Naive thymus-derived CD4-positive, alpha-beta T cell (primary cell): ENCODE measurements at regions of chr2 and their contacts with region 1.

Region 1: GRCh38 chr2:200963124-200963917 is at the start of gene ORC2:
- DNase-seq: peak; percentile 92 to 97 (median 95)
- ATAC-seq: peak; percentile 98
- H3K4me3 ChIP-seq: peak within 1 kb of the TSS; percentile 89
- H3K4me3 Mint-ChIP-seq: peak within 1 kb of the TSS; percentile 89 to 100 (median 98)
- H3K27ac ChIP-seq: peak within 1 kb of the TSS; percentile 90
- H3K27ac Mint-ChIP-seq: peak within 1 kb of the TSS; percentile 96 to 100 (median 99)
- H3K4me1 ChIP-seq: peaks cover 21 to 32% of the 10 kb centered on the region in 2 donors
- H3K4me1 Mint-ChIP-seq: peaks cover 40 to 83% (median 70%) of the 10 kb centered on the region in 7 donors
- H3K27me3 ChIP-seq: no peaks in the 10 kb centered on the region
- H3K27me3 Mint-ChIP-seq: no peaks in the 10 kb centered on the region
- total RNA-seq, gene ORC2: 29.8 to 78.0 (median 56.2) TPM

Region 2: DNA sequence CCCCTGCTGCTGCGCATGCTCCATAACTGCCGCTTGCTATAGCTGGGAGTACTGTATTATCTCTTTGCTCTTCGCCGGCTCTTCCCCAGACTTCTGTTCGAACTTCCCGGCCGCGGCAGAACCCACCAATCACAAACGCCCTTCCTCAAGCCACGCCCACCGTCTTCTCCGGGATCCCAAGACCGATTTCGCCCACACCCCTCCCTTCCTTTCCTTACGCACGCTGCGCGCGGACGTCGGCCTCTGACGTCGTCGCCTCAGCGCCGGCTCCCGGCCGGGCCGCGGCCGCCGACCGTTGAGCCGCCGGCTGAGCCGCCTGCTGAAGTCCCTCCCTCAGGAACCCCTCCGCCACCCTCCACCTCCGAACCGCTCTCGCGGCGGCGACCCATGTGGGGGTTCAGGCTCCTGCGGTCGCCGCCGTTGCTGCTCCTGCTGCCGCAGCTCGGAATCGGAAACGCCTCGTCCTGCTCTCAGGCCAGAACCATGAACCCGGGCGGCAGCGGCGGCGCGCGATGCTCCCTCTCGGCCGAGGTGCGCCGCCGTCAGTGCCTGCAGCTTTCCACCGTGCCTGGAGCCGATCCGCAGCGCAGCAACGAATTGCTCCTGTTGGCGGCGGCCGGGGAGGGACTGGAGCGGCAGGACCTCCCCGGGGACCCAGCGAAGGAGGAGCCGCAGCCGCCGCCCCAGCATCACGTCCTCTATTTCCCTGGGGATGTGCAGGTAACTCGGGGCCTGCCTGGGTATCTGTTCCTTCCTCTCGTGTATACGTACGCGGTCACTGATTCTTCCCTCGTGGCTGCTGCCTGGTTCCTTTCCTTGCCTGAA is 1052.1 kb before region 1 on chr2 and contains the start of gene C2orf69:
- CTCF ChIA-PET with region 1: no interaction called
- POLR2A ChIA-PET with region 1: no interaction called
- intact Hi-C with region 1: loop called in 1 of 2 experiments (anchors 1 kb)
- DNase-seq: peak; percentile 80 to 92 (median 83)
- ATAC-seq: peak; percentile 93
- H3K4me3 ChIP-seq: peak within 1 kb of the TSS; percentile 75
- H3K4me3 Mint-ChIP-seq: peak within 1 kb of the TSS; percentile 89 to 100 (median 98)
- H3K27ac ChIP-seq: peak within 1 kb of the TSS; percentile 89
- H3K27ac Mint-ChIP-seq: peak within 1 kb of the TSS; percentile 72 to 95 (median 94)
- H3K4me1 ChIP-seq: peaks cover 11 to 19% of the 10 kb centered on the region in 2 donors
- H3K4me1 Mint-ChIP-seq: peaks cover 26 to 47% (median 37%) of the 10 kb centered on the region in 7 donors
- H3K27me3 ChIP-seq: no peaks in the 10 kb centered on the region
- H3K27me3 Mint-ChIP-seq: peaks cover 0 to 14% (median 8%) of the 10 kb centered on the region in 5 donors
- total RNA-seq, gene C2orf69: 10.1 to 15.4 (median 12.7) TPM

Region 3: GRCh38 chr2:200713003-200713703 is 250.2 kb before region 1 on chr2:
- CTCF ChIA-PET with region 1: interaction called, 4 read pairs
- POLR2A ChIA-PET with region 1: interaction called, 4 read pairs
- intact Hi-C with region 1: loop called (anchors 1 kb)
- DNase-seq: peak; percentile 72 to 96 (median 94)
- ATAC-seq: peak; percentile 98
- H3K4me3 ChIP-seq: peak overlapping the region; percentile 24
- H3K4me3 Mint-ChIP-seq: peak overlapping the region; percentile 75 to 88 (median 81)
- H3K27ac ChIP-seq: peak overlapping the region; percentile 82
- H3K27ac Mint-ChIP-seq: peak overlapping the region; percentile 97 to 100 (median 99)
- H3K4me1 ChIP-seq: peaks cover 5 to 8% of the 10 kb centered on the region in 2 donors
- H3K4me1 Mint-ChIP-seq: peaks cover 0 to 25% (median 12%) of the 10 kb centered on the region in 7 donors
- H3K27me3 ChIP-seq: no peaks in the 10 kb centered on the region
- H3K27me3 Mint-ChIP-seq: peaks cover 0 to 4% (median 0%) of the 10 kb centered on the region in 5 donors

Region 4: GRCh38 chr2:200747668-200748618 is 215.4 kb before region 1 on chr2:
- CTCF ChIA-PET with region 1: no interaction called
- POLR2A ChIA-PET with region 1: no interaction called
- intact Hi-C with region 1: no loop called
- DNase-seq: no peak
- ATAC-seq: no peak
- H3K4me3 ChIP-seq: no peak overlapping the region
- H3K4me3 Mint-ChIP-seq: no peak overlapping the region
- H3K27ac ChIP-seq: no peak overlapping the region
- H3K27ac Mint-ChIP-seq: peak overlapping the region in 1 of 9 donors; percentile 72
- H3K4me1 ChIP-seq: no peaks in the 10 kb centered on the region
- H3K4me1 Mint-ChIP-seq: no peaks in the 10 kb centered on the region
- H3K27me3 ChIP-seq: no peaks in the 10 kb centered on the region
- H3K27me3 Mint-ChIP-seq: peaks cover 4 to 14% (median 6%) of the 10 kb centered on the region in 5 donors

Region 5: DNA sequence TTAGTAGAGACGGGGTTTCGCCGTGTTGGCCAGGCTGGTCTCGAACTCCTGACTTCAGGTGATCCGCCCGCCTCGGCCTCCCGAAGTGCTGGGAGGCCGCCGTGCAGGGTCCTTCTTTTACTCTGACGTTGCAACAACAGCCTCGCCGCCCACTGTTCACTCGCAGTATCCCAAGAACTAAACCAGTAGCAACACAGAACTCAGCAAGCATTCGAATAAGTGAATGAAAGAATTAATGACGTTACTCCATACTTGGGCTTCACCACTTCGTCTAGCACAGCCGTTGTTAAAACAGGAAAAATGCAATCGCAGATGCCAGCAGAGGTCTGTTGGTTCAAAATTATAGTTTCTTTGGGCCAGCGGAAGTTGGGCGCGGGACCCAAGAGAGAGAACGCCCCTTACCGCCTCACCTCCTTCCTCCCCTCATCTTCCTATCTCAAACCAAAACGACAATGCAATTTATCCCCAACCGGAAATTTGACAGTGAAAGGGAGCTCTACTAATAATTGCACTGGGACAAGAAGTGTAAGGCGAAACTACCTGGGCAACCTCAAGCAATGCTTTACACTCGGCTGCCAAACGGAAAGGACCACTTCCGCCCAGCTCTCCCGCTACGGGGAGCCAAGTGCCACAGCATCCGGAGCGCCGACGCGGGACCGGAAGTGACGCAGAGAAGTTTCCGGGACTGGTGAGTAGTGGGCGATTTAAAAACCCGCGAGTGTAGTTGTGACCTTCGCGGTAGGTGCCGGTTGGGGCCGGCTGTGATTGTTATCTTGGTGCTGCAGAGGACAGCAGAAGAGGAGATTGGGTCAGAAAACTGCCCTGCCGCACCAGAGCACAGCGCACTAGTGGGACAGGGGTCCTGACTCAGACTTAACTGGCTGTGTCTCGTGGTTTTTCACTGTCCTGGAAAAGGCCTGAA is 74.4 kb before region 1 on chr2 and contains the starts of genes NIF3L1 and PPIL3:
- CTCF ChIA-PET with region 1: no interaction called
- POLR2A ChIA-PET with region 1: interaction called, 10 read pairs
- intact Hi-C with region 1: loop called (anchors 1 kb)
- DNase-seq: peak; percentile 88 to 97 (median 95)
- ATAC-seq: peak; percentile 89
- H3K4me3 ChIP-seq: peak within 1 kb of the TSS; percentile 83
- H3K4me3 Mint-ChIP-seq: peak within 1 kb of the TSS; percentile 88 to 100 (median 96)
- H3K27ac ChIP-seq: peak within 1 kb of the TSS; percentile 86
- H3K27ac Mint-ChIP-seq: peak within 1 kb of the TSS; percentile 97 to 100 (median 100)
- H3K4me1 ChIP-seq: peaks cover 23 to 26% of the 10 kb centered on the region in 2 donors
- H3K4me1 Mint-ChIP-seq: peaks cover 35 to 75% (median 60%) of the 10 kb centered on the region in 7 donors
- H3K27me3 ChIP-seq: no peaks in the 10 kb centered on the region
- H3K27me3 Mint-ChIP-seq: no peaks in the 10 kb centered on the region
- total RNA-seq, gene NIF3L1: 11.5 to 33.9 (median 31.4) TPM
- total RNA-seq, gene PPIL3: 28.5 to 69.7 (median 49.1) TPM

Region 6: GRCh38 chr2:201071479-201072200 is 108.3 kb after region 1 on chr2 and contains the starts of genes HYCC2 and NDUFB3:
- CTCF ChIA-PET with region 1: interaction called, 12 read pairs
- POLR2A ChIA-PET with region 1: interaction called, 16 read pairs
- intact Hi-C with region 1: loop called (anchors 1 kb)
- DNase-seq: peak; percentile 79 to 96 (median 95)
- ATAC-seq: peak; percentile 98
- H3K4me3 ChIP-seq: peak within 1 kb of the TSS; percentile 92
- H3K4me3 Mint-ChIP-seq: peak within 1 kb of the TSS; percentile 91 to 99 (median 94)
- H3K27ac ChIP-seq: peak within 1 kb of the TSS; percentile 83
- H3K27ac Mint-ChIP-seq: peak within 1 kb of the TSS; percentile 86 to 99 (median 95)
- H3K4me1 ChIP-seq: peaks cover 32 to 36% of the 10 kb centered on the region in 2 donors
- H3K4me1 Mint-ChIP-seq: peaks cover 31 to 74% (median 55%) of the 10 kb centered on the region in 7 donors
- H3K27me3 ChIP-seq: no peaks in the 10 kb centered on the region
- H3K27me3 Mint-ChIP-seq: no peaks in the 10 kb centered on the region
- total RNA-seq, gene HYCC2: 34.8 to 38.3 (median 36.1) TPM
- total RNA-seq, gene NDUFB3: 18.3 to 109 (median 38.3) TPM

Region 7: GRCh38 chr2:201257956-201258665 is 294.8 kb after region 1 on chr2:
- CTCF ChIA-PET with region 1: interaction called, 3 read pairs
- POLR2A ChIA-PET with region 1: no interaction called
- intact Hi-C with region 1: loop called (anchors 1 kb)
- DNase-seq: peak; percentile 72 to 99 (median 98)
- ATAC-seq: peak; percentile 84
- H3K4me3 ChIP-seq: peak overlapping the region; percentile 80
- H3K4me3 Mint-ChIP-seq: peak overlapping the region; percentile 85 to 100 (median 94)
- H3K27ac ChIP-seq: peak overlapping the region; percentile 91
- H3K27ac Mint-ChIP-seq: peak overlapping the region; percentile 95 to 99 (median 98)
- H3K4me1 ChIP-seq: peaks cover 63 to 71% of the 10 kb centered on the region in 2 donors
- H3K4me1 Mint-ChIP-seq: peaks cover 44 to 91% (median 75%) of the 10 kb centered on the region in 7 donors
- H3K27me3 ChIP-seq: no peaks in the 10 kb centered on the region
- H3K27me3 Mint-ChIP-seq: no peaks in the 10 kb centered on the region

Region 8: GRCh38 chr2:201847481-201847880 is 884.2 kb after region 1 on chr2:
- CTCF ChIA-PET with region 1: no interaction called
- POLR2A ChIA-PET with region 1: no interaction called
- intact Hi-C with region 1: no loop called
- DNase-seq: no peak
- ATAC-seq: no peak
- H3K4me3 ChIP-seq: no peak overlapping the region
- H3K4me3 Mint-ChIP-seq: no peak overlapping the region
- H3K27ac ChIP-seq: no peak overlapping the region
- H3K27ac Mint-ChIP-seq: no peak overlapping the region
- H3K4me1 ChIP-seq: no peaks in the 10 kb centered on the region
- H3K4me1 Mint-ChIP-seq: no peaks in the 10 kb centered on the region
- H3K27me3 ChIP-seq: no peaks in the 10 kb centered on the region
- H3K27me3 Mint-ChIP-seq: peaks cover 0 to 21% (median 8%) of the 10 kb centered on the region in 5 donors